ENCODE measurements at regions of chrX and their contacts with region 1.

Region 1: GRCh38 chrX:40651620-40652223 is 4.4 kb upstream of the CXorf38 start:
- DNase-seq: peak in 5 of 6 donors; percentile 43 to 78 (median 66)
- ATAC-seq: peak in 2 of 4 donors; percentile 48 to 53
- H3K4me3 ChIP-seq: no peak overlapping the region
- H3K27ac ChIP-seq: no peak overlapping the region
- H3K4me1 ChIP-seq: no peaks in the 10 kb centered on the region
- H3K27me3 ChIP-seq: no peaks in the 10 kb centered on the region
- CTCF ChIP-seq: peak; percentile 49 to 85 (median 68)

Region 2: GRCh38 chrX:40772290-40772689 is 120.6 kb after region 1 on chrX:
- intact Hi-C with region 1: no loop called
- DNase-seq: no peak
- ATAC-seq: no peak
- H3K4me3 ChIP-seq: no peak overlapping the region
- H3K27ac ChIP-seq: no peak overlapping the region
- H3K4me1 ChIP-seq: no peaks in the 10 kb centered on the region
- H3K27me3 ChIP-seq: peaks cover 0 to 19% (median 4%) of the 10 kb centered on the region in 4 donors
- CTCF ChIP-seq: no peak

Region 3: GRCh38 chrX:40792433-40792832 is 140.7 kb after region 1 on chrX:
- intact Hi-C with region 1: loop called in 1 of 3 experiments (anchors 5 kb)
- DNase-seq: no peak
- ATAC-seq: no peak
- H3K4me3 ChIP-seq: no peak overlapping the region
- H3K27ac ChIP-seq: no peak overlapping the region
- H3K4me1 ChIP-seq: no peaks in the 10 kb centered on the region
- H3K27me3 ChIP-seq: peaks cover 0 to 26% (median 0%) of the 10 kb centered on the region in 4 donors
- CTCF ChIP-seq: no peak

Measured in pancreas (tissue), 10 donors.